Left colon (tissue), 2 donors: ENCODE measurements at regions of chr9 and their contacts with region 1.

Region 1: DNA sequence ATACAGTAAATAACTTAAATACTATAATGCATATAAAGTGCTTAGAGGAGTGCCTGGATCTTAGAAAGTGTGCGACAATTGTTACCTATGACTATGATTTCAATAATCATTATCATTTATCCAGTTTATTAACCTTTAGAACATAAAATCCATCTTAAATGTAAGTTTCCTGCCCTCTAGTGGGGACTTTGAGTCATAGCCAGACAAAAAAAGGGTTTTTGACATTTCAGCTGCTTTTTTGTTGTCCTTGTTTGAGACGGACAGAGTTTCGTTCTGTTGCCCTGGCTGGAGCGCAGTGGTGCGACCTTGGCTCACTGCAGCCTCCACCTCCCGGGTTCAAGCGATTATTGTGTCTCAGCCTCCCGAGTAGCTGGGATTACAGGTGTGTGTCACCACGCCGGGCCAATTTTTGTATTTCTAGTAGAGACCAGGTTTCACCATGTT is 9.7 kb upstream of the C9orf152 start:
- DNase-seq: no peak
- ATAC-seq: no peak

Region 2: GRCh38 chr9:110088099-110088498 is 129.6 kb before region 1 on chr9:
- intact Hi-C with region 1: no loop called
- DNase-seq: no peak
- ATAC-seq: no peak

Region 3: GRCh38 chr9:110183208-110184145 is 34.2 kb before region 1 on chr9:
- intact Hi-C with region 1: loop called in 1 of 2 experiments (anchors 5 kb)
- DNase-seq: peak; percentile 62 to 69
- ATAC-seq: peak; percentile 74